Heart left ventricle (tissue), 16 donors: ENCODE measurements at regions of chr15 and their contacts with region 1.

Region 1: GRCh38 chr15:61974759-61975158 is 85.5 kb downstream of the VPS13C start:
- DNase-seq: no peak
- ATAC-seq: peak; percentile 73 to 88 (median 80)
- H3K4me3 ChIP-seq: no peak overlapping the region
- H3K27ac ChIP-seq: peak overlapping the region in 7 of 12 donors; percentile 0 to 31 (median 24)
- H3K4me1 ChIP-seq: peaks cover 0 to 20% (median 2%) of the 10 kb centered on the region in 12 donors
- H3K27me3 ChIP-seq: no peaks in the 10 kb centered on the region
- CTCF ChIP-seq: no peak
- POLR2A ChIP-seq: no peak

Region 2: GRCh38 chr15:61856295-61856694 is 118.5 kb before region 1 on chr15:
- intact Hi-C with region 1: no loop called
- DNase-seq: no peak
- ATAC-seq: no peak
- H3K4me3 ChIP-seq: no peak overlapping the region
- H3K27ac ChIP-seq: no peak overlapping the region
- H3K4me1 ChIP-seq: peaks cover 0 to 15% (median 0%) of the 10 kb centered on the region in 12 donors
- H3K27me3 ChIP-seq: no peaks in the 10 kb centered on the region
- CTCF ChIP-seq: no peak
- POLR2A ChIP-seq: no peak

Region 3: GRCh38 chr15:61916104-61916503 is 58.7 kb before region 1 on chr15:
- intact Hi-C with region 1: loop called in 1 of 10 experiments (anchors 5 kb)
- DNase-seq: peak in 1 of 5 donors; percentile 19
- ATAC-seq: peak; percentile 66 to 90 (median 72)
- H3K4me3 ChIP-seq: no peak overlapping the region
- H3K27ac ChIP-seq: peak overlapping the region in 5 of 12 donors; percentile 18 to 45 (median 40)
- H3K4me1 ChIP-seq: peaks cover 0 to 7% (median 0%) of the 10 kb centered on the region in 12 donors
- H3K27me3 ChIP-seq: no peaks in the 10 kb centered on the region
- CTCF ChIP-seq: no peak
- POLR2A ChIP-seq: no peak

Region 4: GRCh38 chr15:62060113-62060895 is 85.5 kb after region 1 on chr15 and contains the start of gene VPS13C:
- intact Hi-C with region 1: loop called in 1 of 10 experiments (anchors 10 kb)
- DNase-seq: peak; percentile 93 to 96 (median 94)
- ATAC-seq: peak; percentile 99
- H3K4me3 ChIP-seq: peak within 1 kb of the TSS; percentile 62 to 99 (median 92)
- H3K27ac ChIP-seq: peak within 1 kb of the TSS; percentile 62 to 99 (median 88)
- H3K4me1 ChIP-seq: peaks cover 0 to 41% (median 14%) of the 10 kb centered on the region in 12 donors
- H3K27me3 ChIP-seq: no peaks in the 10 kb centered on the region
- CTCF ChIP-seq: peak; percentile 48 to 94 (median 76)
- POLR2A ChIP-seq: peak in 1 of 2 donors; percentile 83
- total RNA-seq, gene VPS13C: 29.7 to 70.1 (median 39.4) TPM

Region 5: DNA sequence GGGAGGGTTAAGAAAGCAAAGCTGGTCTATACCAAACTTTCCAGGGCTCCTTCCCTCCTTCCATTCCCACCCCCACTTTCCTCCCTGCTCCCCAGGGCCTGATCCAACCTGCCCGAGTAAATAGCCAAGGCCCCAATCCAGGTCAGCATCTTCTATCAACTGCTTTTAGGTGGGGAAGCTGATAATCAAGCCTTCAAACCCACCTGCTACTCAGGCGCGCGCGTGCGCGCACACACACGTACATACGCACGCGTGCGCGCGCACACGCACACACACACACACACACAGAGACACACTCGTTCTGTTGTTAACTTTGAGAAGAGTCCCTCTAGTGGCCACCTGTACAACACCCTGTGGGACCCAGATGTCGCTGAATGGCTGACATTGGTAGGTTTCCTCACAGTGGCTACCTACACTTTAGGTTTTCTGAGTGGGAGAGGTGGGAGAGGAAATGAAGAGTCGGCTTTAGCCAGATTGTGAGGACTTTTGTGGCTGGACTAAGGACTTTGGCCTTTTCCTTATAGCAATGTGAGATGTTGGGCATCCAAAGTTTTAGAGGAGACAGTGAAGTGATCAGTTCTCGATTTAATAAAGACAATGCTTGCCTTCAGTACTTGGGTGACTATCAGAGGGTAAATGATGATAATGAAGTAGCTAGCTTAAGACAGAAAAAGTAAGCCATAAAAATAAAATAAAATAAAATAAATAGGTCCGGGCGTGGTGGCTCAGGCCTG is 370.2 kb after region 1 on chr15:
- intact Hi-C with region 1: no loop called
- DNase-seq: peak in 4 of 5 donors; percentile 21 to 65 (median 33)
- ATAC-seq: peak in 3 of 4 donors; percentile 74 to 77 (median 77)
- H3K4me3 ChIP-seq: peak overlapping the region in 3 of 12 donors; percentile 20 to 29 (median 21)
- H3K27ac ChIP-seq: no peak overlapping the region
- H3K4me1 ChIP-seq: no peaks in the 10 kb centered on the region
- H3K27me3 ChIP-seq: no peaks in the 10 kb centered on the region
- CTCF ChIP-seq: peak; percentile 31 to 63 (median 52)
- POLR2A ChIP-seq: no peak

Region 6: GRCh38 chr15:62766599-62766998 is 791.8 kb after region 1 on chr15:
- intact Hi-C with region 1: no loop called
- DNase-seq: no peak
- ATAC-seq: peak in 1 of 4 donors; percentile 27
- H3K4me3 ChIP-seq: no peak overlapping the region
- H3K27ac ChIP-seq: no peak overlapping the region
- H3K4me1 ChIP-seq: peaks cover 0 to 19% (median 0%) of the 10 kb centered on the region in 12 donors
- H3K27me3 ChIP-seq: no peaks in the 10 kb centered on the region
- CTCF ChIP-seq: no peak
- POLR2A ChIP-seq: no peak